PC-9 (cell line): ENCODE measurements at regions of chr6 and their contacts with region 1.

Region 1: GRCh38 chr6:144953552-144954240 is 668.6 kb downstream of the UTRN start:
- DNase-seq: peak; percentile 76 to 79
- H3K4me3 ChIP-seq: no peak overlapping the region
- H3K27ac ChIP-seq: peak overlapping the region; percentile 37; the same call in 1 of the 2 replicates
- H3K4me1 ChIP-seq: peaks cover 22% of the 10 kb centered on the region
- H3K27me3 ChIP-seq: no peaks in the 10 kb centered on the region
- CTCF ChIP-seq: no peak

Region 2: GRCh38 chr6:144471986-144472385 is 481.7 kb before region 1 on chr6:
- CTCF ChIA-PET with region 1: no interaction called
- POLR2A ChIA-PET with region 1: interaction called, 14 read pairs
- intact Hi-C with region 1: no loop called
- DNase-seq: no peak
- H3K4me3 ChIP-seq: no peak overlapping the region
- H3K27ac ChIP-seq: no peak overlapping the region
- H3K4me1 ChIP-seq: no peaks in the 10 kb centered on the region
- H3K27me3 ChIP-seq: no peaks in the 10 kb centered on the region
- CTCF ChIP-seq: no peak

Region 3: DNA sequence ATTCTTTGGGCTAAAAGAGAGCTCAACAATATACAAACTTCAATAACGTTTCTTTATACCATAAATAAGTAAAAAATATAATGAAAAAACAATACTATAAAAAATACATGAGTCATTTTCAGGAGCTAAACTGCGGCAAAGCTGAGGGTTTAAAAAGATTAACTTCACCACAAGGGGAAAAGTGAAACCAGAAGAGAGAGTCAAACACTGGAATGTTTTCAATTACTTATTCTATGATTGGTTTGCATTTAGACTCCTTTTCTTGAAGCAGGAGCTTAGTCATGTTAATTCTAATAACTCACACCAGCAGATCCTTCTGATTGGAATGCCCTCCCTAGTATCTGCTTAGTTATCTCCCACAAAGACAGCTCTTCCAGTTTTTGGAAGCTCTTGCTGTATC is 41.2 kb before region 1 on chr6:
- CTCF ChIA-PET with region 1: no interaction called
- POLR2A ChIA-PET with region 1: no interaction called
- intact Hi-C with region 1: loop called (anchors 5 kb)
- DNase-seq: no peak
- H3K4me3 ChIP-seq: no peak overlapping the region
- H3K27ac ChIP-seq: 0 out of 2 replicates have a peak overlapping the region, but pooled peaks have one; percentile 16
- H3K4me1 ChIP-seq: peaks cover 22% of the 10 kb centered on the region
- H3K27me3 ChIP-seq: no peaks in the 10 kb centered on the region
- CTCF ChIP-seq: no peak

Region 4: DNA sequence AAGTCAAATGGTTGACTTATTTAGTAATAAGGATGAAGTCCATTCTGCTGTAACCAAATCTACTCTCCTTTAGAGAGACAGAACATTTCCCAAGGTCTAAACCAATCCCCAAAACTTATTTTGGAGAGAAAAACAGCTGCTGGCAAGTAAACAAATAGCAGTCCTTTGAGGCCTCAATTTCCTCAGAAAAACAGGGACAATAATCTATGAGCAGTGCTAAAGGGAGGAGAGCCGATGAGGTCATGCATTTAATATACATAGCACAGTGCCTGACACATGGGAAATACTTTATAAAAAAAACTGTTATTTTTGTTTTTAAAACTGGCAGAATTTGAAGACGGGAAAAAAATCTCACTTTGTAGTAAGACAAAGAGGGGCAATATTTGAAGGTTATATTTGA is 255.6 kb after region 1 on chr6:
- CTCF ChIA-PET with region 1: no interaction called
- POLR2A ChIA-PET with region 1: no interaction called
- intact Hi-C with region 1: loop called (anchors 2 kb)
- DNase-seq: no peak
- H3K4me3 ChIP-seq: no peak overlapping the region
- H3K27ac ChIP-seq: no peak overlapping the region
- H3K4me1 ChIP-seq: no peaks in the 10 kb centered on the region
- H3K27me3 ChIP-seq: no peaks in the 10 kb centered on the region
- CTCF ChIP-seq: no peak